Ovary (tissue), 10 donors: ENCODE measurements at regions of chr16 and their contacts with region 1.

Region 1: DNA sequence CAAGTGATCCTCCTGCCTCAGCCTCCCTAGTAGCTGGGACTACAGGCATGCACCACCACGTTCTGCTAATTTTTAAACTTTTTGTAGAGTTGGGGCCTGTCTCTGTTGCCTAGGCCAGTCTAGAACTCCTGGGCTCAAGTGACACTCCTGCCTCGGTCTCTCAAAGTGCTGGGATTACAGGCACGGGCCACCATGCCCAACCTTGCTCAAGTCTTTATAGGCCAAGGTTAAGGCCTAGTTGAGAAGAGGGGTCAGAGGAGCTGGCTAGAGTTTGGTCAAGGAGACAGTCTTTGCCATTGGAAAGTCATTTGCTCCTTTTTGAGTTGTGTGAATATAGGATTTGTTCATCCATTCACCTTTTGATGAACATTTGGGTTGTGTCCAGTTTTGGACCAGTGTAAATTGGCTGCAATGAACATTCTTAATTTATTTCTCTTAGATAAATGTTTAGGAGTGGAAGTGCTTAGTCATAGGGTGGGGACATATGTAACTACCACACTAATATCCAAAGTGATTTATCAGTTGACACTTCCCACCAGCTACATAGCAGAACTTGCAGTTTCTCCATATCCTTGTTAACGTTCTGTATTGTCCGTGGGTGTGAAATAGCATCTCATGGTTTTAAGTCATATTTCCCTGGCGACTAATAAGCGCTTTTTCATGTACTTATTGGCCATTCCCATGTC is 30.7 kb upstream of the ARHGAP17 start:
- DNase-seq: no peak
- H3K4me3 ChIP-seq: no peak overlapping the region
- H3K27ac ChIP-seq: no peak overlapping the region
- H3K4me1 ChIP-seq: no peaks in the 10 kb centered on the region
- H3K27me3 ChIP-seq: no peaks in the 10 kb centered on the region
- CTCF ChIP-seq: no peak
- EP300 ChIP-seq: no peak
- POLR2A ChIP-seq: no peak

Region 2: GRCh38 chr16:24988593-24989338 is 57.1 kb before region 1 on chr16:
- intact Hi-C with region 1: loop called in 1 of 4 experiments (anchors 10 kb)
- DNase-seq: peak in 1 of 5 donors; percentile 32
- H3K4me3 ChIP-seq: no peak overlapping the region
- H3K27ac ChIP-seq: peak overlapping the region; percentile 25 to 30
- H3K4me1 ChIP-seq: peaks cover 23% of the 10 kb centered on the region
- H3K27me3 ChIP-seq: no peaks in the 10 kb centered on the region
- CTCF ChIP-seq: no peak
- EP300 ChIP-seq: no peak
- POLR2A ChIP-seq: no peak